Lower leg skin (tissue), 4 donors: ENCODE measurements at regions of chr1 and their contacts with region 1.

Region 1: DNA sequence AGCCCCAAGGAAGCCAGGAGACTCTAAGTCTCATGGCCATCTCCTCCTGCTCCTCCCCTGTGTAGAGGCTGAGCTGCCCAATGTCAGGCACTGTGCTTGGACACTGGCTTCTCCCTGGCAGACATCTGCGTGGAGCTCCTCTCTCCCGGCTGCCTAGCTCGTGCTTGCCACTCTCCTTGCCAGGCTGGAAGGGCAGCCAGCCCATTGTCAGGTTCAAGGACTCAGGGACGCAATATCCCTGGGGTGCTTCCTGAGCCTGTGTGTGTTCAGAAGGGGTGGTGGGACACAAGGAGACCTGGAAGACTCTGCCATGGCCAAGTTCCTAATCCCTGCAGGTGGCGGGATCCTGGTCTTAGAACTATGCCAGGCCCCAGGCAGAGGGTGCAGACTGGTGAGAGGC is 65.4 kb upstream of the PARP1 start:
- DNase-seq: no peak
- H3K4me3 ChIP-seq: no peak overlapping the region
- CTCF ChIP-seq: no peak
- POLR2A ChIP-seq: no peak

Region 2: GRCh38 chr1:226519716-226520598 is 46.6 kb after region 1 on chr1:
- intact Hi-C with region 1: loop called (anchors 2 kb)
- DNase-seq: peak in 1 of 2 donors; percentile 75
- H3K4me3 ChIP-seq: no peak overlapping the region
- CTCF ChIP-seq: no peak
- POLR2A ChIP-seq: no peak